HCT116 (cell line): ENCODE measurements at regions of chr1 and their contacts with region 1.

Region 1: GRCh38 chr1:12658531-12659453 is 14.9 kb downstream of the AADACL4 start:
- DNase-seq: peak; percentile 81
- ATAC-seq: peak; percentile 96
- H3K4me3 ChIP-seq: no peak overlapping the region
- H3K27ac ChIP-seq: no peak overlapping the region
- H3K4me1 ChIP-seq: peaks cover 0 to 6% of the 10 kb centered on the region in 2 experiments; a peak in 1 of 4 replicates
- H3K27me3 ChIP-seq: no peaks in the 10 kb centered on the region
- CTCF ChIP-seq: peak; percentile 87 to 95 (median 91)
- POLR2A ChIP-seq: no peak
- RAD21 ChIP-seq: peak; percentile 99

Region 2: DNA sequence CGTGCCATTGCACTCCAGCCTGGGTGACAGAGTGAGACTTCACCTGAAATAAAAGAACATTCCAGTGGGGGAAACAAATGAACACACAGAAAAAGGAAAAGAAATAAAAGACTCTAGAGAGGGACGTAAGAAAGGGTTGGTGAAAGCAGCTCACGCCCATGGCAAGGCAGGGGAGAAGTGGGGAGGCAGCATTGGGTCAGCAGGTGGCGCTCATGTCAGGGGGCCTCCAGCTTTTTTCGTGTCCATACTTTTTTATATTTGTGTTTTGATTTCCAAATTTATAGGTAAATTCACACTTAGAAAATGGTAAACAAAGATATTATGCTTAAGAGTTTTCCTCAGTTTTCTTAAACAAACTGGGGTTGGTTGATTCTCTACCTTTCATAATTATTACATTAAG is 383.4 kb before region 1 on chr1:
- CTCF ChIA-PET with region 1: interaction called, 19 read pairs
- POLR2A ChIA-PET with region 1: no interaction called
- RAD21 ChIA-PET with region 1: interaction called, 4 to 5 read pairs
- intact Hi-C with region 1: loop called (anchors 1 kb)
- DNase-seq: no peak
- ATAC-seq: peak; percentile 70
- H3K4me3 ChIP-seq: no peak overlapping the region
- H3K27ac ChIP-seq: no peak overlapping the region
- H3K4me1 ChIP-seq: no peaks in the 10 kb centered on the region
- H3K27me3 ChIP-seq: no peaks in the 10 kb centered on the region
- CTCF ChIP-seq: peak; percentile 64 to 92 (median 80)
- POLR2A ChIP-seq: no peak
- RAD21 ChIP-seq: peak; percentile 66

Region 3: GRCh38 chr1:12314333-12314903 is 344.4 kb before region 1 on chr1:
- CTCF ChIA-PET with region 1: interaction called, 33 read pairs
- POLR2A ChIA-PET with region 1: no interaction called
- RAD21 ChIA-PET with region 1: interaction called, 4 to 7 read pairs
- intact Hi-C with region 1: loop called (anchors 1 kb)
- DNase-seq: no peak
- ATAC-seq: peak; percentile 80
- H3K4me3 ChIP-seq: no peak overlapping the region
- H3K27ac ChIP-seq: no peak overlapping the region
- H3K4me1 ChIP-seq: no peaks in the 10 kb centered on the region
- H3K27me3 ChIP-seq: no peaks in the 10 kb centered on the region
- CTCF ChIP-seq: peak; percentile 25 to 81 (median 71); a peak in 3 of 6 replicates
- POLR2A ChIP-seq: no peak
- RAD21 ChIP-seq: peak; percentile 84

Region 4: GRCh38 chr1:12604114-12604874 is 54.5 kb before region 1 on chr1:
- CTCF ChIA-PET with region 1: interaction called, 10 read pairs
- POLR2A ChIA-PET with region 1: no interaction called
- RAD21 ChIA-PET with region 1: no interaction called
- intact Hi-C with region 1: no loop called
- DNase-seq: peak; percentile 76
- ATAC-seq: peak; percentile 81
- H3K4me3 ChIP-seq: 0 out of 4 replicates have a peak overlapping the region, but pooled peaks of 1 of the 2 experiments have one; percentile 10
- H3K27ac ChIP-seq: peak overlapping the region; percentile 42
- H3K4me1 ChIP-seq: peaks cover 52 to 81% of the 10 kb centered on the region in 2 experiments
- H3K27me3 ChIP-seq: no peaks in the 10 kb centered on the region
- CTCF ChIP-seq: no peak
- POLR2A ChIP-seq: no peak
- RAD21 ChIP-seq: no peak

Region 5: DNA sequence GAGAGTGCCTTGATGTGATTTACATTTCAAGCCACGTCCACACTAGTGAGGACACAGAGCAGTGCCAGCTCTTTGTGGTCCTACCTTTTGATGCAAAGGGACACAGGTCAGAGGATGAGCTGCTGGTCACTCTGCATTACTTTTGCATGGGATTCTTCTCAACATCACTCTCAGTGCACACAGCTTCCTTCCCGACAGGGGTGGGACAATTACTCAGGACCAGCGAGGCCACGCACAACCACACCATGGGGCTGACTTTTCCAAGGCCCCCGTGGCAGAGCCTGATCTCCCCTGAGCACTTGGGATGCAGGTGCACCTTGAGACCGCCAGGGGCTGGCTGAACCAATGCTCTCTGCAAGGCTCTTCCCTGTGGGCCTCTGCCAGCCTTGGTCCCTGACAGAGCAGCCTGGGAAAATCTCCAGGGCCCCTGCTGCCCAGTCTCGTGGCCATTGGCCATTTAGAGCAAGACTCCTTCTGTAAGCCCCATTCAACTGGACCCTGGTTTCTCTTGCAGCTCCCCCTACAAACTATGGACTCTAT is 101.5 kb after region 1 on chr1:
- CTCF ChIA-PET with region 1: no interaction called
- POLR2A ChIA-PET with region 1: no interaction called
- RAD21 ChIA-PET with region 1: no interaction called
- intact Hi-C with region 1: no loop called
- DNase-seq: peak; percentile 12
- ATAC-seq: peak; percentile 93
- H3K4me3 ChIP-seq: no peak overlapping the region
- H3K27ac ChIP-seq: no peak overlapping the region
- H3K4me1 ChIP-seq: no peaks in the 10 kb centered on the region
- H3K27me3 ChIP-seq: peaks cover 12% of the 10 kb centered on the region; the same call in 1 of the 2 replicates
- CTCF ChIP-seq: peak in 2 of 3 experiments; percentile 56 to 75; a peak in 4 of 6 replicates
- POLR2A ChIP-seq: no peak
- RAD21 ChIP-seq: no peak